Sciatic nerve (tissue), 2 donors: ENCODE measurements at regions of chr11 and their contacts with region 1.

Region 1: DNA sequence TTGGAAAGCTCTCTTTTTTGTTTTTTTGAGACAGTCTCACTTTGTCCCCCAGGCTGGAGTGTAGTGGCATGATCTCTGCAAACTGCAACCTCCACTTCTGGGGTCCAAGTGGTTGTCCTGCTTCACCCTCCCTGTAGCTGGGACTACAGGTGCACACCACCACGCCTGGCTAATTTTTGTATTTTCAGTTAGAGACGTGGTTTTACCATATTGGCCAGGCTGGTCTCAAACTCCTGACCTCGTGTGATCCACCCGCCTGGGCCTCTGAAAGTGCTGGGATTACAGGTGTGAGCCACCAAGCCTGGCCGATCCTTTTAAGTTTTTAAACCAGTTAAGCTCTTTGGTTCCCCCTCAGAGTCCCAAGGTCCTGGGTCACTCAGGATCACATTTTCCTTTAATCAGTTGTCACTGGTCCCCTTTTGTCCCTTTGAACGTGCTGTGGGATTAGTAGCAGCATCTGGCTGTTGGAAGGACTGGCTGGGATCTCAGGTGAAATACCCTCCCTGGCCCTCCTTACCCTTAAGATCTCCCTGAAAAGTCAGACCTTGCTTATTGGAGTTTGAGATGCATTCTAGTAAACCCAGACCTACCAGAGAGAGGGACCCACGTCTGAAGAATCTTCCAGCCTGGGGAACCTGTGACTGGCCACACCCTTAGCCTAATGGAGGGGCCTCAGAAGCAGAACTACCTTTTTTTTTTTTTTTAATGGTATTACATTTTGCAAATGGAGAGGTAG is 8.1 kb downstream of the MALAT1 start:
- DNase-seq: peak; percentile 74
- ATAC-seq: peak; percentile 51

Region 2: DNA sequence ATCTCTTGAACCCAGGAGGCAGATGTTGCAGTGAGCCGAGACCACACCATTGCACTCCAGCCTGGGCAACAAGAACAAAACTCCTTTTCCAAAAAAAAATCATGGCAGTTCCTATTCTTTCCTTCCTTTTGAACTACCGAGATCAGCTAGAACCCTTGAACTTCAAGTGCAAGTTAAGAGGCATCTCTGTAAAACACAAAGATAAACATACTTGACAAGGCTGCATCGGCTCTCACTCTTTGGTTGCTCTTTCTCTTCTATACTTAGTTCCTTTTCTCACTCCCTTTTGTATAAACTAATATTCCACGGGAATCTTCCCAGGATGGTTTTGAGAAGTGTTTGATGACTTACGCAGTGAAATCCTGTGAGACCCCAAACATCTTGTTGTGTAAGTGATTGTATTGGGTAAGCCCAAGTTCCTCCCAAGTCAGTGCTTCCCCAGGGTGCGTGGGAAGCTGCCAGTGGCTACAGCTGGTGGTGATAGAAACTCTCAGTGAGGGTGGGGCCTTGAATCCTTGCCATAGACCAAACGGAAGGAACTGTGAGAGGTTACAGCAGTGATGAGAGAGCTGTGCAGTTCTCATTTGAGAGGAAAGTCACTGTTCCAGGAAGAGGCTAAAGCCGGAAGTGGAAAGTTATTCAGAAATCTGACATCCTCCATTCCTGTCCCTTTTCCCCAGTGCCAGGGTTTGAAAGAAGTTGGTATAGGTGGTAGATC is 216.3 kb before region 1 on chr11:
- intact Hi-C with region 1: no loop called
- DNase-seq: peak; percentile 95
- ATAC-seq: peak; percentile 96

Region 3: GRCh38 chr11:65418711-65419459 is 88.1 kb before region 1 on chr11:
- intact Hi-C with region 1: loop called (anchors 2 kb)
- DNase-seq: peak; percentile 98
- ATAC-seq: peak; percentile 64